ENCODE measurements at regions of chr2 and their contacts with region 1.

Region 1: DNA sequence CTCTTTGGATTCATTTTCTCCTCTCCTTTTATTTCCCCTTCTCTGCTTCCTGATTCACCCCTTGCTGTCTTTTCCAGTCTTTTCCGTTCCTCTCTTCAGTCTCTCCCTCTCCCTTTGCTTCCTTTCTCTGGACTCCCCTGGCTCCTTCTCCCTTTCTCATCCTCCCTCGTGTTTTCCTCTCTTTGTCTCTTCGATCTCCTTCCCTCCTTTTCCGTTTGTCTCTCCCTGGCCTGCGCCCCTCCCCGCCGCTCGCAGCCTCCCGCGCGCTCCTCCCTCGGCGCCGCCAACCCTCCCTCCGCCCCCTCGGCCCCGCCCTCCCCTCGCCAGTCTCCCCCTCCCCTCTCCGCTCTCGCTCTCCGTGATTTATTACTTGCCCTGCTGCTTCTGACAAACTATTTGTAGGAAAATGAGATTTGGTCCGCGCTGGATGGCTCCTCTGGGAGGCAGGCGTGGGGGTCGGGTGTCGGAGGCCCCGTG is 46.0 kb upstream of the PAX8 start:
- DNase-seq: no peak
- H3K4me3 ChIP-seq: peak overlapping the region; percentile 31 to 72 (median 53)
- H3K27ac ChIP-seq: peak overlapping the region; percentile 42 to 76
- H3K4me1 ChIP-seq: no peaks in the 10 kb centered on the region
- H3K27me3 ChIP-seq: no peaks in the 10 kb centered on the region
- CTCF ChIP-seq: no peak
- POLR2A ChIP-seq: no peak

Region 2: GRCh38 chr2:113240150-113240862 is 84.4 kb before region 1 on chr2:
- intact Hi-C with region 1: no loop called
- DNase-seq: peak; percentile 55 to 71
- H3K4me3 ChIP-seq: no peak overlapping the region
- H3K27ac ChIP-seq: no peak overlapping the region
- H3K4me1 ChIP-seq: peaks cover 0 to 11% of the 10 kb centered on the region in 2 donors
- H3K27me3 ChIP-seq: no peaks in the 10 kb centered on the region
- CTCF ChIP-seq: no peak
- POLR2A ChIP-seq: no peak

Region 3: GRCh38 chr2:113361051-113361450 is 36.3 kb after region 1 on chr2:
- intact Hi-C with region 1: loop called (anchors 1 kb)
- DNase-seq: no peak
- H3K4me3 ChIP-seq: no peak overlapping the region
- H3K27ac ChIP-seq: no peak overlapping the region
- H3K4me1 ChIP-seq: no peaks in the 10 kb centered on the region
- H3K27me3 ChIP-seq: no peaks in the 10 kb centered on the region
- CTCF ChIP-seq: no peak
- POLR2A ChIP-seq: no peak